Esophagus muscularis mucosa (tissue), 4 donors: ENCODE measurements at regions of chr11 and their contacts with region 1.

Region 1: DNA sequence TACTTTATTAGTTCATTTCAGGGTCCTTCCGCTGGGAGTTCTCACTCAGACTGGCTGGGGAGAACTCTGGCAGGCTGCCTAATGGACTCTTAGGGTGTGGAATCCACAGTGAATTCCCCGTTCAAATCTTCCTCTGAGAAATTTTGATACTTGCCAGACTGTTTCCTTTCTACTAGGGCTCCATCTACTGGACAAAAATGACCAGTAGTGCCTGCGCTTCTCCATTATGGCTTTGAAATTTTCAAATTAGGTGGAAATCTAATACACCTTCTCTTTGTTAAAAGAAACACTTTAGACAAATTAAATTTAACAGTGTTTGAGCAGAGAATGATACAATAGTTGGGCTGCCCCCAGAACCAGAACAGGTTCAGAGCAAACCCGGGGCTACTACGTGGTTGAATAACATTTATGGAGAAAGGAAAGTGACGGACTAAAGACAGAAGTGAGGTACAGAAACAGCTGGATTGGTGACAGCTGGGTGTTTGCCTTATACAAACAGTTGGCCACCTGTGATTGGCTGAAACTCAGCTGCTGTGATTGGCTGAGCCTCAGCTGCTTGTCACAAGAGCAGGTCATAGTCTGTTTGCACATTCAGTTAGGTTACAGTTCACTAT is 52.9 kb upstream of the FDX1 start:
- DNase-seq: no peak
- H3K4me3 ChIP-seq: peak overlapping the region; percentile 20 to 42 (median 26)
- H3K27ac ChIP-seq: peak overlapping the region; percentile 45 to 61 (median 60)
- H3K4me1 ChIP-seq: peaks cover 11 to 15% (median 12%) of the 10 kb centered on the region in 4 donors
- H3K27me3 ChIP-seq: no peaks in the 10 kb centered on the region
- CTCF ChIP-seq: peak; percentile 78 to 88 (median 82)
- EP300 ChIP-seq: no peak
- POLR2A ChIP-seq: no peak

Region 2: DNA sequence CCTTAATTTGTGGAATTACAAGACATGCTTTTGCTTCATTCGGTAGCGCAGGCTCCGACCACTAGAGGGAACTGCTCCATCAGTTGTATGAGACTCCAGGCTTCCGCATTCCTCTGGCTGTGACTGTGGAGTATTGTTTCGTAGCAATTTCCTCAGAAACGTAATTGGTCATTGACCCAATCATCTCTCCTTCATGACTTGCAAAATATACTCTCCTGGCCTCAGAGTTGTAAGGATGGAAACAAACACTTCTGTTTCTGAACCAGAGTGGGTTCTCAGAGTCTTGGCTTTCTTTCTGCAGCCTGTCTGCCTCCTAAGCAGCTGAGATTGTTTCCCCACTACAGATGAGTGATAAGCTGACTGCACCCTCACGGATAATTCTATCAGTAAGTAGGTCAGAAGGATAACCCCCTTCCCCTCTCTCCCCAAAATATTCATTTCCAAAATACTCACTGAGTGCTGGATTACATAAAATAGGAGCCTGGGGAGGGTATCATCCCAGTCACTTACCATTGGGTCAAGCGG is 430.4 kb before region 1 on chr11:
- intact Hi-C with region 1: loop called (anchors 10 kb)
- DNase-seq: peak; percentile 97
- H3K4me3 ChIP-seq: peak overlapping the region; percentile 28 to 49 (median 37)
- H3K27ac ChIP-seq: peak overlapping the region; percentile 49 to 72 (median 64)
- H3K4me1 ChIP-seq: peaks cover 4 to 7% (median 5%) of the 10 kb centered on the region in 4 donors
- H3K27me3 ChIP-seq: no peaks in the 10 kb centered on the region
- CTCF ChIP-seq: peak; percentile 89 to 97 (median 92)
- EP300 ChIP-seq: no peak
- POLR2A ChIP-seq: no peak

Region 3: GRCh38 chr11:110195845-110196754 is 180.7 kb before region 1 on chr11:
- intact Hi-C with region 1: loop called (anchors 2 kb)
- DNase-seq: peak; percentile 50
- H3K4me3 ChIP-seq: no peak overlapping the region
- H3K27ac ChIP-seq: no peak overlapping the region
- H3K4me1 ChIP-seq: no peaks in the 10 kb centered on the region
- H3K27me3 ChIP-seq: no peaks in the 10 kb centered on the region
- CTCF ChIP-seq: no peak
- EP300 ChIP-seq: no peak
- POLR2A ChIP-seq: no peak

Region 4: DNA sequence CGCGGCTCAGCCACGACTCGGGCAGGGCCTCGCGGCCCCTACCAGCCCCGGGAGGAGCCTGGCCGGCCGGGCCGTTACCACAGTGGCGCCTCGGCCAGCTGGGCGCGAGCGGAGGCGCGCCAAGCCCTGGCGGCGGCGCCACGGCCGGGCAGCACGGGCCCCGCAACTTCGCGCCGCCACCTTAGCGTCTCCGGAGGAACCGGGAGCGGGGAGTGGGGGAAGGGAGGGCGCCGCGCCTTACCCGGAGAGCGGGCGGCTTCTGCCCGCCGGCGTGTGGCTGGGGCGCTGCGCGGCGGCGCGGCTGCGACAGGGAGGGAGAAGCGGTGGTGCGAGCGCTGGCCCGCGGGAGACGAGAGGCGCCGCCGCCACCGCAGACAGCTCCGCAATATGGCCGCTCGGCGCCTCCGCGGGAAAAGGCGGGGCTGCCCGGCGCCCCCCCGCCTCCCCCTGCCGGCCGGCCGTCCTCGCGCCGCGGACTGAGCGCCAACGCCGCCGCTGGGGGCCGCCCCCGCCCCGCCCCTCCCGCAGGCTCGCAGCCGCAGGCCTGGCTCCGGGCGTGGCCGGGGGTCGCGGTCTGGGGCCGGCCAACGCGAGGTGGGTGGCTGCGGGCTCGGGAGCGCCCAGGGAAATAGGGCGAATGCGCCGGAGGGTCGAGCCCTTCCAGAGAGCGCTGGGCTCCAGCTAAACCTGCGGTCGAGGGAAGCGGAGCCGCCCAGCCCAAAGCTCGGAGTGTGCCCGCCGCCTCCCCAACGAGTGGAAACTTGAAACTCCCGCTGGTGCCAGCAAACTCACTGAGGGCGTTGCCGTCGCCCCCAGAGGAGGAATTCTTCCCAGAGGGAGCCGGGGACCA is 80.4 kb before region 1 on chr11 and contains the start of gene RDX:
- intact Hi-C with region 1: loop called (anchors 5 kb)
- DNase-seq: no peak
- H3K4me3 ChIP-seq: peak within 1 kb of the TSS; percentile 88 to 97 (median 94)
- H3K27ac ChIP-seq: peak within 1 kb of the TSS; percentile 96 to 99 (median 98)
- H3K4me1 ChIP-seq: peaks cover 45 to 57% (median 50%) of the 10 kb centered on the region in 4 donors
- H3K27me3 ChIP-seq: no peaks in the 10 kb centered on the region
- CTCF ChIP-seq: peak; percentile 1 to 12 (median 7)
- EP300 ChIP-seq: no peak
- POLR2A ChIP-seq: peak; percentile 37
- total RNA-seq, gene RDX: 86.6 to 105 (median 90.4) TPM

Region 5: DNA sequence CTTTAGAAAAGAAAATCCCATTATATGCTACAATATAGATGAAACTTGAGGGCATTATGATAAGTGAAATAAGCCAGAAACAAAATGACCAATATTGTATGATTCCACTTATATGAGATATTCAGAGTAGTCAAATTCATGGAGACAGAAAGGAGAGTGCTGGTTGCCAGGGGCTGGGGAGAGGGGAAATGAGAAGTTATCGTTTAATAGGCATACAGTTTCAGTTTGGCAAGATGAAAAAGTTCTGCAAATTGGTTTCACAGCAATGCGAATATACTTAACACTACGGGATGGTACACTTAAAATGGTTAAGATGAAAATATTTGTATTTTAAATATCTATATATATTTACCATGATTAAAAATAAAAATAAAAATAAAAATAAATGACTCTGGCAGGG is 49.3 kb before region 1 on chr11:
- intact Hi-C with region 1: no loop called
- DNase-seq: no peak
- H3K4me3 ChIP-seq: no peak overlapping the region
- H3K27ac ChIP-seq: no peak overlapping the region
- H3K4me1 ChIP-seq: no peaks in the 10 kb centered on the region
- H3K27me3 ChIP-seq: no peaks in the 10 kb centered on the region
- CTCF ChIP-seq: no peak
- EP300 ChIP-seq: no peak
- POLR2A ChIP-seq: no peak

Region 6: DNA sequence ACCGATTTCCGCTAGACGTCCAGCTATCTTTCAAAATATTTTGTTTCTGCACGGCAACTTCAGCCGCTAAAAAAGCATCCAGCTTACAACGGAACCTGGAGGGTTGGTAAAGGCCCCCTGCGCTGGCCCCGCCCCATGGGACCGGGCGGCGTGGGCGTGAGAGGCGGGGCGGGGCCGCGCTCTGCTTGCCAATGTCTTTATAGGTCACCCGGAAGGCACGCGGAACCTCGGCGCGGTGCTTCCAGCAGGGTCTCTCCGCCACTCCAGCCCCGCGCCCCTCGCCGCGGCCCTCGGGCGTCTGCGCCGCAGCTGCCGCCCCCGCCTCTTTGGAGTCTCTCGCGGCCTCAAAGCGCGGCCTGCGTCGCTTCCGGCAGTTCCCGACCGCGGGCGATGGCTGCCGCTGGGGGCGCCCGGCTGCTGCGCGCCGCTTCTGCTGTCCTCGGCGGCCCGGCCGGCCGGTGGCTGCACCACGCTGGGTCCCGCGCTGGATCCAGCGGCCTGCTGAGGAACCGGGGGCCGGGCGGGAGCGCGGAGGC is 53.0 kb after region 1 on chr11 and contains the start of gene FDX1:
- intact Hi-C with region 1: loop called (anchors 5 kb)
- DNase-seq: peak; percentile 94
- H3K4me3 ChIP-seq: peak within 1 kb of the TSS; percentile 75 to 99 (median 80)
- H3K27ac ChIP-seq: peak within 1 kb of the TSS; percentile 88 to 97 (median 91)
- H3K4me1 ChIP-seq: peaks cover 27 to 46% (median 45%) of the 10 kb centered on the region in 4 donors
- H3K27me3 ChIP-seq: no peaks in the 10 kb centered on the region
- CTCF ChIP-seq: peak; percentile 59 to 85 (median 64)
- EP300 ChIP-seq: no peak
- POLR2A ChIP-seq: no peak
- total RNA-seq, gene FDX1: 12.0 to 15.7 (median 13.6) TPM